Right ventricle myocardium superior (tissue), 1 donor: ENCODE measurements at regions of chr19 and their contacts with region 1.

Region 1: GRCh38 chr19:37906869-37907734 is at the start of gene SIPA1L3:
- DNase-seq: peak; percentile 97
- ATAC-seq: peak; percentile 99
- total RNA-seq, gene SIPA1L3: 8.5 TPM

Region 2: GRCh38 chr19:37706052-37706605 is 201.0 kb before region 1 on chr19:
- intact Hi-C with region 1: no loop called
- DNase-seq: no peak
- ATAC-seq: no peak

Region 3: DNA sequence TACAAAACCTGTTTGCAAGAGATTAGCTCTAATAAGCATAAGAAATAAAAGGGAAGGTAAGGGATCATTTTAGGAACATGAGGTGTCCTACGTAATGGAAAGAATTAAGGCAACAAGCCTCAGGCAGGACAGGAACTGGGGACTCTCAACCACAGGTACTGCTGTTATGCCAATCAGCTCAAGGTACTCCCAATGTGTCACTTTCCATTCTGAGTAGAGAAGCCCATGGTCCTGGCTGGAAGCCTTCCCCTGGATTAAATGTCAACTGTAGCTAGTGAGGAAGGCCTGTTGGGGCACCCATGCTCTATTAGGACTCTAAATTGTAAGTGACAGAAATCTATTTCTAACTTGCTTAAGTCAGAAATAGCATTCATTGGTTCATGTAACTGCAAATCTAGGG is 182.3 kb after region 1 on chr19:
- intact Hi-C with region 1: loop called (anchors 5 kb)
- DNase-seq: no peak
- ATAC-seq: no peak